ENCODE measurements at regions of chr7 and their contacts with region 1.

Region 1: DNA sequence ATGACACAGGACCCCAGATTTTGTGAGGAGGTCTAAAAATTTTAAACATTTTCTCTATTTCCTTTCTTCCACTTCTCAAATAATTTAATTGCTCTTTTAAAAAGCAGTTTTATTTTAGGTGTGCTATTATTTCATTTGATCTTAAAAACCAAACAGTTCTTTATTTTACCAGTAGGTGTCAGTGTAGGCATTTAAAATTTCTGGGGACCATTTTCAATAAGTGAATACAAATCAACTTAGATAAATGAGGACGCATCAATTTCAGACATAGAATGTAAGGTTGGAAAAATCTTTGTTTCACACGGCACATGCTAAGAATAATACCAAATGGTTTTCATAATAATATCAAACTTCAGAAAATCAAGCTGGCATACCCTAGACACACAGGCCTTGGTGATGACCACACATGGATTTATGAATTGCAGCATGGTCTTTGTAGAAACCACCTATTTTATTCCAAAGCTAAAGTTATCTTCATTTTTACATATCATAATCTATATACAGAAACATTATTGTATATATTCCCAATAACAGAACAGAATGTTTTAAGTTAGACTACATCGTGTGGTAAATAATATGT is 127.6 kb upstream of the SLC26A5 start:
- DNase-seq: peak; percentile 43
- ATAC-seq: no peak
- H3K4me3 ChIP-seq: no peak overlapping the region
- H3K4me3 Mint-ChIP-seq: no peak overlapping the region
- H3K27ac ChIP-seq: no peak overlapping the region
- H3K27ac Mint-ChIP-seq: no peak overlapping the region
- H3K4me1 ChIP-seq: no peaks in the 10 kb centered on the region
- H3K4me1 Mint-ChIP-seq: no peaks in the 10 kb centered on the region
- H3K27me3 ChIP-seq: no peaks in the 10 kb centered on the region
- H3K27me3 Mint-ChIP-seq: peaks cover 15% of the 10 kb centered on the region
- CTCF ChIP-seq: peak; percentile 84

Region 2: GRCh38 chr7:104156842-104157277 is 583.3 kb after region 1 on chr7:
- CTCF ChIA-PET with region 1: interaction called, 5 read pairs
- POLR2A ChIA-PET with region 1: no interaction called
- intact Hi-C with region 1: loop called (anchors 5 kb)
- DNase-seq: no peak
- ATAC-seq: no peak
- H3K4me3 ChIP-seq: no peak overlapping the region
- H3K4me3 Mint-ChIP-seq: no peak overlapping the region
- H3K27ac ChIP-seq: no peak overlapping the region
- H3K27ac Mint-ChIP-seq: no peak overlapping the region
- H3K4me1 ChIP-seq: no peaks in the 10 kb centered on the region
- H3K4me1 Mint-ChIP-seq: no peaks in the 10 kb centered on the region
- H3K27me3 ChIP-seq: no peaks in the 10 kb centered on the region
- H3K27me3 Mint-ChIP-seq: no peaks in the 10 kb centered on the region
- CTCF ChIP-seq: peak; percentile 42